Activated CD4-positive, alpha-beta memory T cell treated with anti-CD3 and anti-CD28 coated beads, Interleukin-2, amount 10 ng/mL, durations not matched to agents 7 days and 5 days (primary cell): ENCODE measurements at regions of chr15 and their contacts with region 1.

Region 1: DNA sequence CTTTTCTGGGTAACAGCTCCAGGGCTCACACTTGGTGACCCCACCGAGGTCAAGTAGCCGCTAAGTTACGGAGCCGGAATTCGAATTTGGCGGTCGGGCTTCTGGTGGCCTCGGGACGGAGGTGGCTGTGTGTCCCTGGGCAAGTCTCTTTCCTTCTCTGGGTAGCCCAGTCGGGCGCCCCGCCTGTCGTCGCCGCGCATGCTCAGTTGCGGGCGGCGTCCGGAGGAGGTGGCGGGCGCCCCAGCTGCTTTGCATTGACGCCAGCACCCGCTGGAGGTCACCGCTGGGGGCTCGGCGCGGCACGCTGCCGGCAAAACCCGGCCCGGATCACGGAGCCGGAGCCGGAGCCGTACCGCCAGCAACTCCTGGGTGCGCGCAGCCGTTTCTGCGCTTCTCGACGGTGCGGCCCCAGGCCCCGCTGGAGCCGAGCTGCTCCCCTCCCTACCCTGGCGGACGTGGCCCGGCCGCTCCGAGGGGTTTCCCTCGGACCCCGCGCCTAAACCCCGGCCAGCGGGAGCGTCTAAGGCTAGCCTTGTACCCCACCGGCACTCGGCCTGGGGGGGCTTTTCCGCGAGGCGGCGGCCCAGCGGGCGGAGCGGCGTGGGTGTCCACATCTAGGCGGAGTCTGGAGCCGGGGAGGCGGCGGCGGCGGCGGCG is 474 bp upstream of the PDE8A start:
- DNase-seq: peak; percentile 97
- H3K4me3 Mint-ChIP-seq: peak overlapping the region; percentile 88
- H3K27ac Mint-ChIP-seq: peak overlapping the region; percentile 94
- H3K4me1 Mint-ChIP-seq: peaks cover 48% of the 10 kb centered on the region
- H3K27me3 Mint-ChIP-seq: peaks cover 5% of the 10 kb centered on the region

Region 2: DNA sequence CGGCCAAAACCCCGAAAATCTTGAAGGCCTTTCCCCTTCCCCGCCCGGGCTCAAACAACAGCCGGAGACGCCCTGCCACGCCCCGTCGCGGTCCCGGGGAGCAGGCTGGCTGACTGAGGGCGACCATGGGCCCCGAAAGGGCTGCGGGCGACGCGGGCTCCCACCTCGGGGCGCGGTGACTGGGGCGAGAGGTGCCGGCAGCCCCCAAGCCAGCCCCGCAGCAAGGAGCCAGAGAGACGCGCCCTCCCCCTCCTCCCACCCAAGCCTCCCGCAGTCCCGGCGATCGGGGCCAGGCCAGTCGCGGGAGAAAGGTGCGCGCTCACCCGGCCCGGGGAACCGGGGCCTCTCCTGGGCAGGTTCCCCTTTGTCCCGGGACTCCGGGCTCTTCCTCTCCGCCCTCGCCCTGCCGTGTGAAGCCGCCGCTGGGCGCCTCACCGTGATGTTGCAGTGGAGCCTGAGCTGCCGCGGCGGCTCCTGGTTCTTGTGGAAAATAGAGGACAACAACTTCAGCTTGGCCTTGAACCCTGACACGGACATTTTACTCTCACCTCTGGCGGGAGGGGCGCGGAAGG is 410.9 kb before region 1 on chr15:
- CTCF ChIA-PET with region 1: interaction called, 6 read pairs
- POLR2A ChIA-PET with region 1: interaction called, 17 read pairs
- DNase-seq: peak; percentile 70
- H3K4me3 Mint-ChIP-seq: peak overlapping the region; percentile 88
- H3K27ac Mint-ChIP-seq: peak overlapping the region; percentile 79
- H3K4me1 Mint-ChIP-seq: peaks cover 20% of the 10 kb centered on the region
- H3K27me3 Mint-ChIP-seq: peaks cover 2% of the 10 kb centered on the region

Region 3: DNA sequence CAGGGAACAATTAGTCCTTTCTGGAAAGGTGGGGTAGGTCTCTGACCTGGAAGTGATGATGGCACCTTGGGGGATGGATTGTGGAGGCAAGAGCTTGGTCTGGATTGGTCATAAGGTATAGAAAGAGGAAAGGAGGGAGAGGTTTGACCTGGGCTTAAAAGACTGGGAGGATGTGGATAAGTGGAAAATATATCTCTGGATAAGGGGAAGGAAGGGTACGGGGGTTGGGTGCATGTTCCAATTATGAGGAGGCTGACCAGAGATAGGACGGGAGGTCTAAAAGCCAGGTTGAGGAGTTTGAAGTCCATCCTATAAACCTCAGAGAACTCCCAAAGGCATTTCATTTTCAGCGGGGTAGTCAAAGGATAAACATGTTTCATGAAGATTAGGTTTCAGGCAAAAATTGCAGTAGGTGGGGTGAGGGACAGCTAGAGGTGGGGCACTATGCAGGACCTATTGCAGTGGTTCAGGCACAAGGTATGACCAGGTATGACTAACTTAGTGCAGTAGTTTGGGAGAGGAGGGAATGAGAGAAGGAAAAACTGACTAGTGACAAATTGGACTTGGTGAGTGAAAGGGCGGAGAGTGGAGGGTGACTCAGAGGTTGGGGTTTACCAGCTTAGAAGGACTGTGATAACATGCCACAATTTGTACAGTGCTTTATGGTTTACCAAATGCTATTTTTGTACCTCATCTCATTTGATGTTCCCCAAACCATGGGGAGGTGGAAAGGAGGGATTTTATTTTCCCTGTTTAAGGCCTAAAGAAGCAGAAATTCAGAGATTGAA is 11.2 kb after region 1 on chr15:
- CTCF ChIA-PET with region 1: interaction called, 4 read pairs
- POLR2A ChIA-PET with region 1: interaction called, 20 read pairs
- DNase-seq: peak; percentile 42
- H3K4me3 Mint-ChIP-seq: no peak overlapping the region
- H3K27ac Mint-ChIP-seq: peak overlapping the region; percentile 6
- H3K4me1 Mint-ChIP-seq: peaks cover 47% of the 10 kb centered on the region
- H3K27me3 Mint-ChIP-seq: no peaks in the 10 kb centered on the region